ENCODE measurements at regions of chrX and their contacts with region 1.

Region 1: GRCh38 chrX:73855546-73855945 is 292.5 kb downstream of the CHIC1 start:
- DNase-seq: peak; percentile 79
- H3K4me3 ChIP-seq: no peak overlapping the region
- H3K27ac ChIP-seq: no peak overlapping the region
- H3K27me3 ChIP-seq: no peaks in the 10 kb centered on the region
- CTCF ChIP-seq: peak; percentile 90

Region 2: GRCh38 chrX:74015379-74016019 is 160.0 kb after region 1 on chrX:
- in situ Hi-C with region 1: loop called (anchors 10 kb)
- DNase-seq: peak; percentile 72
- H3K4me3 ChIP-seq: no peak overlapping the region
- H3K27ac ChIP-seq: no peak overlapping the region
- H3K27me3 ChIP-seq: no peaks in the 10 kb centered on the region
- CTCF ChIP-seq: peak; percentile 89

Region 3: GRCh38 chrX:74133156-74133796 is 277.7 kb after region 1 on chrX:
- in situ Hi-C with region 1: loop called (anchors 10 kb)
- DNase-seq: peak; percentile 60
- H3K4me3 ChIP-seq: no peak overlapping the region
- H3K27ac ChIP-seq: no peak overlapping the region
- H3K27me3 ChIP-seq: no peaks in the 10 kb centered on the region
- CTCF ChIP-seq: peak; percentile 64

Measured in brain microvascular endothelial cell (primary cell).